ENCODE measurements at regions of chr11 and their contacts with region 1.

Region 1: GRCh38 chr11:61083601-61084147 is 18.6 kb upstream of the CD5 start:
- DNase-seq: peak; percentile 93
- H3K4me3 Mint-ChIP-seq: peak overlapping the region; percentile 83
- H3K27ac Mint-ChIP-seq: peak overlapping the region; percentile 97
- H3K4me1 Mint-ChIP-seq: peaks cover 60% of the 10 kb centered on the region
- H3K27me3 Mint-ChIP-seq: no peaks in the 10 kb centered on the region

Region 2: DNA sequence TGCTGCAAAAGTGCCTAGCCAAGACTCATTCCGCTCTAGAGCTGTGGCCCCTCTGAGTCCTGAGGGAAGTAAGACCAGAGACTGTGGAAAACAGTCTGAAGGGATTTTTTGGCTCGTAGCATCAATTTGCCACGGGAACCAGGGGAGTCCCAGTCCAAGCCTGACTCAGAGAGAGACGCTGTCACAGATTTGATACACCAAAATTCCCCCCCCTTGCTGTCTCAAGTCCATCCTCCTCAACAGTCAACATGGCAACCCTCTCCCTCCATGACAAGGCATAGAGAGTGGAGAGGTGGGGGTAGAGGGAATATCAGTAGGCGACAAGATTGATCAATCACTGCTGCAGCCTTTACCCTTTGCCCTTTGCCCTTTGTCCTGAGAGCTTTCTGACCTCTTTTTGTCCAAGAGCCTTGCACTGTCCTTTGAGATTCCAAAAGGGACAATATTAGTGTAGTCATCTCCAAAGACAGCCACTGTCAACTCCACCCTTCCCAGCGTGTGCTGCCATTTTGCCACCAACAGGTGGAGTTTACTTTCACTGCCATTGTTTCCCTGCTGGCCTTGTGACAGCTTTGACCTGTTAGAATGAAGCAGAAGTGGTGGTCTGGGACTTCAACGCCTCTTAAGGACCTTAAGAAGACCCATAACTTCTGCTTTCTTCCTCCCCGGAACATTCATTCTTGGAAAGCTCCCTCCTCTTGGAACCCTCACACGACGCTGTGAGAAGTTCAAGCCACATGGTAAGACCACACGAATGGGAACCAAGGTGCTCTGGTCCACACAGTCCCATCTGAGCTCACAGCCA is 139.0 kb before region 1 on chr11:
- intact Hi-C with region 1: no loop called
- DNase-seq: no peak
- H3K4me3 Mint-ChIP-seq: no peak overlapping the region
- H3K27ac Mint-ChIP-seq: no peak overlapping the region
- H3K4me1 Mint-ChIP-seq: peaks cover 6% of the 10 kb centered on the region
- H3K27me3 Mint-ChIP-seq: peaks cover 10% of the 10 kb centered on the region

Region 3: GRCh38 chr11:60978546-60979380 is 104.9 kb before region 1 on chr11:
- intact Hi-C with region 1: loop called (anchors 2 kb)
- DNase-seq: peak; percentile 84
- H3K4me3 Mint-ChIP-seq: peak overlapping the region; percentile 90
- H3K27ac Mint-ChIP-seq: peak overlapping the region; percentile 95
- H3K4me1 Mint-ChIP-seq: peaks cover 72% of the 10 kb centered on the region
- H3K27me3 Mint-ChIP-seq: no peaks in the 10 kb centered on the region

Region 4: DNA sequence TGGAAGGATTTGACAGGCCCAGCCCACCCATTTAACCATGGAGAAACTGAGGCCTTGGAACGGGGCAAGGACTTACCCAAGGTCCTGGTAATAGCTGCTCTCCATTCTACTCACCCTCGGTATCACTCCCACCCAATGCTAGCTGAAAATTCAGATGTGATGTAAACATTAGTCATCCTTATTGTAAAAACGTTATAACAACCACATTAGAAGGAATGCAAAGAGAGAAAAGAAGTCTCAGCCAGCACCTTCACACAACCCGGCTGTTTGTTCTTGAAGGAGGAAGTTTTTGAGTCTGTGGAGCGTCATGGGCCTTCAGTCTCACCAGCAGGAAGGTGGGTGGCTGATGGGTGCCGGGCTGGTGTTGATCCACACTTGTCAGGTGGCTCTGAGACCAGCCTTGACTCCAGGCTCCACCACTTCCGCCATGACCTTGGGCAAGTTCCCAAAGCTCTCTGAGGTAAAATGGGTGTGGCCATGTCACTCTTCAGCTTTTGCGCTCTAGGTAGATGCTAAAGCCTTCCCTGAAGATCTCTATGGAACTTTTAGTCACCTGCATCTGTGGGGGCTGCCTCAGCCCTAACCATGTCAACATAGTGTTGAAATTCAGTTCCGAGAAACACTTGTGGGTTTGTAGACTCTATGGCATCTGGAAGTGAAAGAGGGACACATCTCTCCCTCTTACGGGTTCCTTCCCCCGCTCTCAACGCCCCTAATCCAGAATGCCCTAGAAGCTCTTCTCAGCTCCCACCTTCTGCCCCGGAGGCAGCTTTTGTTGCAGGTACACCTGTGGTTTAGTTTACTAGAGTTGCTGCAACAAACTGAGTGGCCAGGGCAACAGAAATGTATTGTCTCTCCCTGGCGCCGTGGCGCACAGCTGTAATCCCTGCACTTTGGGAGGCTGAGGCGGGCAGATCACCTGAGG is 97.4 kb before region 1 on chr11:
- intact Hi-C with region 1: loop called (anchors 2 kb)
- DNase-seq: peak; percentile 95
- H3K4me3 Mint-ChIP-seq: peak overlapping the region; percentile 84
- H3K27ac Mint-ChIP-seq: peak overlapping the region; percentile 94
- H3K4me1 Mint-ChIP-seq: peaks cover 88% of the 10 kb centered on the region
- H3K27me3 Mint-ChIP-seq: no peaks in the 10 kb centered on the region

Region 5: DNA sequence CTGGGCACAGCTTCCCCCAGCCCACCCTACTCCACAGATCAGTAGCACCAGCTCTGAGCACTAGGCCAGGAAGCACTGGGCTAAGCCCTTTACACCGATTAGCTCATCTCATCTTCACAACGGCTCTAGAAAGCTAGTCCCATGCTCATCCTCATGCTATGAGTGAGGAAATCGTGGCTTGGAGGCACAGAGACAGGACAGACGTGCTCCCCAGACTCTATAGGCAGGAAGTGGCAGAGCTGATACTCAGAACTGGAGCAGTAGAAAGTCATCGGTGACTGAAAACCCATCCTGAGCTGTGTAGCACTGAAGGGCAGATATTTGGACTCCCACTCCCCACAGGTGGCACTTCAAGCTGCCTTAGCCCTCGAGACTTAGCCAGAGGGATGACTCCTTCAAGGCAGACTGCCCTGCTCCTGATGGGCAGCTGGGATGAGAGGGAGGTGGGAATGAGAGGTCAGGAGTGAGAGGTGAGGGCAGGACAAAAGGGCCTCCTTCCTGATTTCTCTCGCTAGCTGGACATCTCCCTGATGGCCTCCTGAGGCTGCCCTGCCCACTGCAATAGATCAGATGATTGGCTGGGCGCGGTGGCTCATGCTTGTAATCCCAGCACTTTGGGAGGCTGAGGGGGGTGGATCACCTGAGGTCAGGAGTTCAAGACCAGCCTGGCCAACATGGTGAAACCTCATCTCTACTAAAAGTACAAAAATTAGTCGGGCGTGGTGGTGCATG is 28.3 kb after region 1 on chr11:
- intact Hi-C with region 1: loop called (anchors 2 kb)
- DNase-seq: peak; percentile 92
- H3K4me3 Mint-ChIP-seq: no peak overlapping the region
- H3K27ac Mint-ChIP-seq: peak overlapping the region; percentile 90
- H3K4me1 Mint-ChIP-seq: peaks cover 91% of the 10 kb centered on the region
- H3K27me3 Mint-ChIP-seq: no peaks in the 10 kb centered on the region

Region 6: DNA sequence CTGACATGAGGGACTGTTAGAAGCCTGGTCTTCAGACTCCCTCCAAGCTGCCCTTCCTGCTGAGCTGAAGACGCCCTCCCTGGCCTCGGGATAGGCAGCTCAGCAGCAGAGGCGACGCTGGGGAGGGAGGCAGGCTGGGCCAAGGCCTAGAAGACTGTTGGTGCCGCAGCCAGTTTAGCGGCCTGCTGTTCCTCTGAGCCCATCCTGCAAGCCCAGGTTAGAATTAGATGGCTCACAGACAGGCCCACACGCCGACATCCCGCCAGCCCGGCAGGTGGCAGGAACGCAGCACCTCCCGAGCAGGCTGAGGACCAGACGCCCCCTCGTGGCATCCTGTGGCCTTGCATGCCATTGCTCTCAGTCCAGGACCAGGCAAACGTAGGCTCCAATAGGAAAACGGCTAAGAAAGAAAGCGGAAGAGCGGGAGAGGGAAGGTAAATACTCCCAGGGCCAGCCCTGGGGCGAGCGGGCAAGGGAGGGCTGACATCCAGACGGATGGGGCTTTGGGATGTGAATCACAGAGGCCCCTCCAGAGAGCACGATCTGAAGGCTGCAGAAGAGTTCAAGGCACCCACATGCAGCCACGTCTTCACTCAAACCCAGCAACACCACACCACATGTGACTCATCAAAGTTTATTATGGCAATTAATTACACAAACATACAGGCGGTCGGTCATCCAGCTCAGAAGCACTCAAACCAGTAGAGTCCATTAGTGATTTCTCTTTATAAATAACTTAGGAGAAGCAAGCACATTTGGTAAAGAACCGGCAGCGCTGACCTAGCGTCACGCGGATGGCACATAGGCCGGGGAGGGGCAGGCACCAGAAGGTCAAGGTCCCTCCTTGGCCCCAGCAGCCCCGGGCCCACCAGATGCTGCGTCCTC is 46.2 kb after region 1 on chr11:
- intact Hi-C with region 1: loop called (anchors 2 kb)
- DNase-seq: peak; percentile 97
- H3K4me3 Mint-ChIP-seq: peak overlapping the region; percentile 50
- H3K27ac Mint-ChIP-seq: peak overlapping the region; percentile 64
- H3K4me1 Mint-ChIP-seq: peaks cover 13% of the 10 kb centered on the region
- H3K27me3 Mint-ChIP-seq: no peaks in the 10 kb centered on the region

Region 7: GRCh38 chr11:61174949-61175348 is 91.3 kb after region 1 on chr11:
- intact Hi-C with region 1: no loop called
- DNase-seq: no peak
- H3K4me3 Mint-ChIP-seq: no peak overlapping the region
- H3K27ac Mint-ChIP-seq: no peak overlapping the region
- H3K4me1 Mint-ChIP-seq: peaks cover 10% of the 10 kb centered on the region
- H3K27me3 Mint-ChIP-seq: peaks cover 13% of the 10 kb centered on the region

Region 8: GRCh38 chr11:61187505-61188130 is 103.9 kb after region 1 on chr11:
- intact Hi-C with region 1: loop called (anchors 5 kb)
- DNase-seq: peak; percentile 93
- H3K4me3 Mint-ChIP-seq: no peak overlapping the region
- H3K27ac Mint-ChIP-seq: no peak overlapping the region
- H3K4me1 Mint-ChIP-seq: peaks cover 2% of the 10 kb centered on the region
- H3K27me3 Mint-ChIP-seq: peaks cover 6% of the 10 kb centered on the region

Region 9: GRCh38 chr11:61254403-61255025 is 170.8 kb after region 1 on chr11:
- intact Hi-C with region 1: no loop called
- DNase-seq: peak; percentile 91
- H3K4me3 Mint-ChIP-seq: no peak overlapping the region
- H3K27ac Mint-ChIP-seq: no peak overlapping the region
- H3K4me1 Mint-ChIP-seq: no peaks in the 10 kb centered on the region
- H3K27me3 Mint-ChIP-seq: peaks cover 3% of the 10 kb centered on the region

Measured in activated CD4-positive, alpha-beta T cell treated with anti-CD3 and anti-CD28 coated beads, Interleukin-2, amount 10 ng/mL, durations not matched to agents 24 days and 14 days (primary cell).